PC-3 (cell line): ENCODE measurements at regions of chr3 and their contacts with region 1.

Region 1: DNA sequence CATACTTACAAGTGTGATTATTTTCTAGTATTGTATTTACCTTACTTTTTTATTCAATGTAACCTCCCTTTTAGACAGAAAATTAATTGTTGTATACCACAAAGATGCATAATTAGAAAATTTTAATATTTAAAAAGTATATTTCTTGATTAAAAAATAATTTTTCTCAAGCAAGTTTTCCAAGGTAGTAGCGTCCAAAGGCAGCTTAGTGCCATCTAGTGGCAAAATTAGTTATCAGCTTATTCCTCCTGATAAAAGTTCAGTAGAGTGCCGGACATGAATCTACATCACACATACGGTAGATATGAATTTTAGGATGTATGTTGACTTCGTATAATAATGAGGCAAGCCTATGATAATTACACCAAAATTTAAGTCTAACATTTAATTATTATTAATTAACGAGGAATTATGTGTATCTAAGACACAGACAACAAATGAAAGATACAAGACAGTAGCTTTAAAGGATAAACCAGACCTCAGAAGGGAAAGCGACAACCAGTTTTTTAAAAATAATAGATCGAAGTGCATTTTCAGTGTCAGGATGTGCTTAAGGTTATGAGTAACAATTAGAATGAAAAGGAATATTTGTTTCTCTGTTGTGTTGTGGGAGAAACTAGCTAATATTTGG is 405.9 kb downstream of the ROBO1 start:
- DNase-seq: peak; percentile 81
- ATAC-seq: peak; percentile 86
- H3K4me3 ChIP-seq: 0 out of 2 replicates have a peak overlapping the region, but pooled peaks have one; percentile 18
- H3K27ac ChIP-seq: no peak overlapping the region
- H3K4me1 ChIP-seq: peaks cover 10% of the 10 kb centered on the region; the same call in 1 of the 2 replicates
- H3K27me3 ChIP-seq: peaks cover 11% of the 10 kb centered on the region; the same call in 1 of the 2 replicates
- CTCF ChIP-seq: peak; percentile 67

Region 2: GRCh38 chr3:78659386-78659987 is 702.4 kb before region 1 on chr3:
- CTCF ChIA-PET with region 1: no interaction called
- POLR2A ChIA-PET with region 1: no interaction called
- intact Hi-C with region 1: loop called (anchors 5 kb)
- DNase-seq: peak; percentile 76
- ATAC-seq: no peak
- H3K4me3 ChIP-seq: no peak overlapping the region
- H3K27ac ChIP-seq: no peak overlapping the region
- H3K4me1 ChIP-seq: no peaks in the 10 kb centered on the region
- H3K27me3 ChIP-seq: no peaks in the 10 kb centered on the region
- CTCF ChIP-seq: peak; percentile 79

Region 3: GRCh38 chr3:79032686-79033318 is 329.1 kb before region 1 on chr3:
- CTCF ChIA-PET with region 1: interaction called, 5 read pairs
- POLR2A ChIA-PET with region 1: no interaction called
- intact Hi-C with region 1: loop called (anchors 5 kb)
- DNase-seq: peak; percentile 86
- ATAC-seq: peak; percentile 61
- H3K4me3 ChIP-seq: no peak overlapping the region
- H3K27ac ChIP-seq: no peak overlapping the region
- H3K4me1 ChIP-seq: peaks cover 6% of the 10 kb centered on the region; the same call in 1 of the 2 replicates
- H3K27me3 ChIP-seq: no peaks in the 10 kb centered on the region
- CTCF ChIP-seq: peak; percentile 87

Region 4: GRCh38 chr3:79067734-79068133 is 294.1 kb before region 1 on chr3:
- CTCF ChIA-PET with region 1: no interaction called
- POLR2A ChIA-PET with region 1: no interaction called
- intact Hi-C with region 1: no loop called
- DNase-seq: no peak
- ATAC-seq: no peak
- H3K4me3 ChIP-seq: no peak overlapping the region
- H3K27ac ChIP-seq: no peak overlapping the region
- H3K4me1 ChIP-seq: no peaks in the 10 kb centered on the region
- H3K27me3 ChIP-seq: peaks cover 37% of the 10 kb centered on the region
- CTCF ChIP-seq: no peak

Region 5: DNA sequence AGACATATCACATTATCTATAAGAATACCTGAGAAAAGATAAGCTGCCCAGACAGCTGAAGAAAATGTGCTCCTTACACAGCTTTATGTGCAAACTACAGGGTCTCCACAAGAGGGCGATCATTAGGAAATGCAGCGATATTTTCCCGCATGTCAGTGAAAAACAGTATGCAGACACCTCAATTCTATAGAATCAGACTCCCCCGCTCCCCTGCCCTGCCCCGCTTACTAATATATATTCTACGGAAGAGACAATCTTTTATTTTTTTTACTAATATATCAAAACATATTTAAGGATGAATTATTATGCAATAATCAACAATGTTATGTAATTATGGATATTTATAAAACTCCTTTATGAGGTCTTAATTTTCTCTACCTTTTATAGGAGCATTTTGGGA is 275.3 kb before region 1 on chr3:
- CTCF ChIA-PET with region 1: interaction called, 70 read pairs
- POLR2A ChIA-PET with region 1: no interaction called
- intact Hi-C with region 1: loop called (anchors 1 kb)
- DNase-seq: peak; percentile 76
- ATAC-seq: peak; percentile 71
- H3K4me3 ChIP-seq: no peak overlapping the region
- H3K27ac ChIP-seq: no peak overlapping the region
- H3K4me1 ChIP-seq: no peaks in the 10 kb centered on the region
- H3K27me3 ChIP-seq: peaks cover 26% of the 10 kb centered on the region
- CTCF ChIP-seq: peak; percentile 86

Region 6: GRCh38 chr3:79140708-79141107 is 221.2 kb before region 1 on chr3:
- CTCF ChIA-PET with region 1: no interaction called
- POLR2A ChIA-PET with region 1: no interaction called
- intact Hi-C with region 1: loop called (anchors 10 kb)
- DNase-seq: peak; percentile 10
- ATAC-seq: peak; percentile 43; the same call in 1 of the 2 replicates
- H3K4me3 ChIP-seq: no peak overlapping the region
- H3K27ac ChIP-seq: no peak overlapping the region
- H3K4me1 ChIP-seq: no peaks in the 10 kb centered on the region
- H3K27me3 ChIP-seq: no peaks in the 10 kb centered on the region; the same call in 1 of the 2 replicates
- CTCF ChIP-seq: no peak

Region 7: DNA sequence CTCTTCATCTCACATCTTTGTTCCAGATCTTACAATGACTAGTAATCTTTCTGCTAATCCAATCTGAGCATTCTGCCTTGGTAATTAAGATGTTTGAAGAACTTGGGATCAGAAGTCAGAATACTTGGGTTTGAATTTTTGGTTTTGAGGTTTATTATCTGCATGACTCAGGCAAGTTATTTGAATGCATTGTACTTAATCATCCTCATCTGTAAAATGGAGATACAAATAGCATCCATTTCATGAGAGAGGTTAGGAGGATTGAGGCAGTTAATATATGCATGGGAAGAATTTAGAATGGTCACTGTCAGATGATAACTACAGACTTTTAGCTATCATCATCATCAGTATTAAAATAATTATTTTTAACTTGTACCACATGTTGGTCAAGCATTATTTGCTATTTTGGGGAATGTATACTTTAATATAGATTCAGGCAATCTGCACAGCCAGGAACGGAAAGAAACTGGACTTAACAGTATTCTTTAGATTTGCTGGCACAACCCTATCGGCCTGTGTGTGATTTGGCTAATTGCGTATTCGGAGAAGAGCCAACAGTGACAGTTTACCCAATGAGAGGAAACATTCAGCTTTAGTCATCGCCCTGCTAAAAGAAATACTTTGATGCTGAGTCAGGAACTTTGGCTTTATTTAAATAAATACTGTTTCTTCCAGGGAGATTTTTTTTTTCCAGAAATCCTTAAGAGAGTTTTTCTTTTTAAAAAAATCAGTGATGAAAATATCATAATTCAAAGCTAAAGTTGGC is 194.0 kb before region 1 on chr3:
- CTCF ChIA-PET with region 1: interaction called, 4 read pairs
- POLR2A ChIA-PET with region 1: no interaction called
- intact Hi-C with region 1: loop called (anchors 5 kb)
- DNase-seq: peak; percentile 95
- ATAC-seq: peak; percentile 97
- H3K4me3 ChIP-seq: no peak overlapping the region
- H3K27ac ChIP-seq: peak overlapping the region; percentile 53
- H3K4me1 ChIP-seq: peaks cover 22% of the 10 kb centered on the region
- H3K27me3 ChIP-seq: no peaks in the 10 kb centered on the region
- CTCF ChIP-seq: no peak

Region 8: DNA sequence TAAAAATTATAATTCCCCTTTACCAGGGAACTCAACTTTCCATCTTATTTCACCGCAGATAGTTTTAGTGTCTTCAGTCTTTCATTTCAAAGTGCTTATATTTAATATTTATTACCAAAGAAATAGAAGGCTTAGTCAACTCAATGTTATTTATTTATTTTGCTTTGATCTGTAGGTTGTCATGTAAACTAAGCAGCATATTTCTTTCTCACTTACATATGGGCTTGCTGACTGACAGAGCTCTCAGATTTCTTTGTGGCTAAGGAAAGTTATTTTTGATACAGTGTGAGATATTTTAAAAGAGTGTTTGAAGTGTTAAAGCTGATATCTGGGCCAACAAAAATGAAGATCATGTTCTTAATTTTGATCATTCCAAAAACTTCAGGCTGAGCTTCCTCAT is 74.5 kb after region 1 on chr3:
- CTCF ChIA-PET with region 1: no interaction called
- POLR2A ChIA-PET with region 1: no interaction called
- intact Hi-C with region 1: no loop called
- DNase-seq: no peak
- ATAC-seq: no peak
- H3K4me3 ChIP-seq: no peak overlapping the region
- H3K27ac ChIP-seq: no peak overlapping the region
- H3K4me1 ChIP-seq: no peaks in the 10 kb centered on the region
- H3K27me3 ChIP-seq: peaks cover 22% of the 10 kb centered on the region; the same call in 1 of the 2 replicates
- CTCF ChIP-seq: no peak